H1 (cell line): ENCODE measurements at regions of chr7 and their contacts with region 1.

Region 1: DNA sequence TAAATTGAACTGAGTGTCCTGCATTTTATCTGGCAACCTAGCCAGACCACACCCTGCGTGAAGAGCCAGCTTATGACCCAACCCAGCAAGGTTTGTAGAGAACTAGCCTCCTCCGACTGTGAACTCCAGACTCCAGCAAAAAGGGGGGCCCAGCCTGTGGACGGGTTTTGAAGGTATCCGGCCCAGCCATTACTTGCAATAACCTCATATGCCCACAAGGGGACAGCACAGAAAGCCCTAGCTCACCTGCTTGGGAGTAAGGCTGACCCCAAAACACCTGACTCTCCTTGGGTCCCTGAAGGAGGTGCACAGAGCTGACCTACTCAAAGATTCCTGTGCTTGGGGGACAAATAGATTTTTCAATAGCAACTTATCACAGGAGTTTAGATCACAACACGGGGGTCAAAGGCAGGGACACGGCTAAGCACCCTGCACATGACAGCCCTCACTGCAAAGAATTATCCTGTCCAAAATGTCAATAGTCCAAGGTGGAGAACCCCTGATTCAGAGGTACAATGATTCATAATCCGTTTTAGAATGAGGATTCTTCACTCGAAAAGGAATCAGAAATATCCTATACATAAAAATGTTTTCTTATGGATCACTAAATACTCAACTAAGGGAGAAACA is 4.6 kb downstream of the TRPV6 start:
- DNase-seq: peak; percentile 23 to 78
- H3K4me3 ChIP-seq: no peak overlapping the region
- H3K27ac ChIP-seq: no peak overlapping the region
- H3K4me1 ChIP-seq: peaks cover 0 to 8% (median 2%) of the 10 kb centered on the region in 4 experiments; a peak in 2 of 7 replicates
- H3K27me3 ChIP-seq: 0 out of 7 replicates have a peak, but pooled peaks cover 0 to 2% (median 0%) of the 10 kb centered on the region in 4 experiments
- CTCF ChIP-seq: peak; percentile 83 to 96 (median 95)
- EP300 ChIP-seq: no peak
- POLR2A ChIP-seq: no peak
- RAD21 ChIP-seq: peak; percentile 77 to 84

Region 2: GRCh38 chr7:142811154-142811737 is 69.7 kb before region 1 on chr7:
- CTCF ChIA-PET with region 1: interaction called, 16 read pairs
- POLR2A ChIA-PET with region 1: no interaction called
- DNase-seq: no peak
- H3K4me3 ChIP-seq: no peak overlapping the region
- H3K27ac ChIP-seq: no peak overlapping the region
- H3K4me1 ChIP-seq: peaks cover 10 to 23% (median 17%) of the 10 kb centered on the region in 4 experiments
- H3K27me3 ChIP-seq: no peaks in the 10 kb centered on the region
- CTCF ChIP-seq: peak in 2 of 3 experiments; percentile 60 to 68; a peak in 3 of 4 replicates
- EP300 ChIP-seq: no peak
- POLR2A ChIP-seq: no peak
- RAD21 ChIP-seq: peak; percentile 65 to 78

Region 3: DNA sequence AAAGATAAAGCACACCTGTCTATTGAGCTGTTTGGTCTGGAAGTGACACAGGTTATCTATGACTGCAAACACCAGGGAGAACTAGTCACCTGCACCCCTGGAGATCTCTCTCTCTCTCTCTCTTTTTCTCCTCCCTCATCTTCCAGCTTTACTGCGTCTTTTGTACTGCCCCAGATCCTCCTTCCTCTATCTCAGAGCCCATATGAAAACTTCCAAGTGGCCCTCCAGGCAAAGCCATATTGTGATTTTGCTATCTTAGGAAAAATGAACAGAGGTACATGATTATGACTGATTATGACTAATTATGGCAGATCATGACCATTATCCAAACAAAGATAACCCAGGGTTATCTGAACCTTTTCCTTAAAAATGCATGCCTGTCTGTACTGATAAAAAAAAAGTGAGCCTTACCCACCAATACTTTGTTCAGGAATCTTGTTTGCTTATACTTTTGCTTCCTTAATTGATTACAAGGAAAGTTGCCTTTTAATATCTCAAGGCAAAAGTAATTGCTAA is 38.7 kb before region 1 on chr7:
- CTCF ChIA-PET with region 1: no interaction called
- POLR2A ChIA-PET with region 1: no interaction called
- DNase-seq: no peak
- H3K4me3 ChIP-seq: no peak overlapping the region
- H3K27ac ChIP-seq: no peak overlapping the region
- H3K4me1 ChIP-seq: no peaks in the 10 kb centered on the region
- H3K27me3 ChIP-seq: peaks cover 0 to 1% (median 0%) of the 10 kb centered on the region in 4 experiments; a peak in 1 of 7 replicates
- CTCF ChIP-seq: no peak
- EP300 ChIP-seq: no peak
- POLR2A ChIP-seq: no peak
- RAD21 ChIP-seq: no peak

Region 4: GRCh38 chr7:142866361-142867058 is 14.5 kb before region 1 on chr7:
- CTCF ChIA-PET with region 1: interaction called, 87 read pairs
- POLR2A ChIA-PET with region 1: no interaction called
- DNase-seq: peak in 1 of 2 experiments; percentile 82
- H3K4me3 ChIP-seq: no peak overlapping the region
- H3K27ac ChIP-seq: no peak overlapping the region
- H3K4me1 ChIP-seq: peaks cover 3 to 10% (median 9%) of the 10 kb centered on the region in 4 experiments; a peak in 6 of 7 replicates
- H3K27me3 ChIP-seq: no peaks in the 10 kb centered on the region
- CTCF ChIP-seq: peak; percentile 79 to 84 (median 83)
- EP300 ChIP-seq: no peak
- POLR2A ChIP-seq: no peak
- RAD21 ChIP-seq: peak; percentile 67 to 77

Region 5: DNA sequence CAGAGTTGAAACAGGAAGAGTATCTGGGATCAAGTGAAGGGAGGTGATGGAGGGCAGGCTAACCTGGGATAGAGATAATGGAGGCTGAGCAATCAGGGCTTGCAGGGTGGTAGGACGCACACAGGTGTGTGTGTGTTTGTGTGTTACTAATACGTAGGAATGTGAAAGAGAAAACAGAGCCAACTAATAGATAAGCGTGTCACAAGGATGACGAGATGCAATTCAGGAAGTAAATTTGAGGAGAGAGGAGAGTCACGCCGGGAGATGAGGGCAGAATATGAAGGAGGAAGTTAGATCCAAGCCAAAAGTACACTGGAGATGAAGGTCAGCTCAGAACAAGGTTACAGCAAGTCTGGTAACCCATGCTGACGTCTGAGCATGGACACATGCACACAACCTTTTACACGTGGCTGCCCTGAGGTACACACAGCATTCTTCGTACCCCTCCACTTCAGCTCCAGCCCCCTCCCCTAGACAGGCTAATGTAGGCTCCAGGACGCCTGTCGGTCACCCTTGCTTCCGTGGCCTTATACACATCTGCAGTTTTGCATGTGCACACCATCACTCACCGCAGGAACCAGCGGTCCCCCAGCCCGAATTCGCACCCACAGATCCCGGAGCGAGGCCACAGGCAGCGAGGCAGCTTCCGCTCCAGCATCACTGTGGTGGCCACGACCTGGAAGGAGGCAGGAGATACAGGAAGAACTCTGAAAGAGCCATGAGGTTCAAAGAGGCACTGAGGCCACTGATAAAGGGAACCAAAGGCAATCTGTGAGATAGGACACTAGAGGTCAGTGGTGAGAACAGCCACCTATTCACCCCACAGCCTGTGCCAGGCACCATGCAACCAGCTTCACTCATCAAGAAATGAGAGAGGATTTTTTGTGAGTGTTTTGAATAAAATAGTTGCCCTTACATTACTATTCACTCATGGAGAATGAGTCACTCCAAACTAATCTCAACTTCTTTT is 28.2 kb after region 1 on chr7:
- CTCF ChIA-PET with region 1: interaction called, 32 read pairs
- POLR2A ChIA-PET with region 1: no interaction called
- DNase-seq: no peak
- H3K4me3 ChIP-seq: no peak overlapping the region
- H3K27ac ChIP-seq: no peak overlapping the region
- H3K4me1 ChIP-seq: no peaks in the 10 kb centered on the region
- H3K27me3 ChIP-seq: no peaks in the 10 kb centered on the region
- CTCF ChIP-seq: peak; percentile 41 to 72 (median 53)
- EP300 ChIP-seq: no peak
- POLR2A ChIP-seq: no peak
- RAD21 ChIP-seq: peak; percentile 43 to 55

Region 6: DNA sequence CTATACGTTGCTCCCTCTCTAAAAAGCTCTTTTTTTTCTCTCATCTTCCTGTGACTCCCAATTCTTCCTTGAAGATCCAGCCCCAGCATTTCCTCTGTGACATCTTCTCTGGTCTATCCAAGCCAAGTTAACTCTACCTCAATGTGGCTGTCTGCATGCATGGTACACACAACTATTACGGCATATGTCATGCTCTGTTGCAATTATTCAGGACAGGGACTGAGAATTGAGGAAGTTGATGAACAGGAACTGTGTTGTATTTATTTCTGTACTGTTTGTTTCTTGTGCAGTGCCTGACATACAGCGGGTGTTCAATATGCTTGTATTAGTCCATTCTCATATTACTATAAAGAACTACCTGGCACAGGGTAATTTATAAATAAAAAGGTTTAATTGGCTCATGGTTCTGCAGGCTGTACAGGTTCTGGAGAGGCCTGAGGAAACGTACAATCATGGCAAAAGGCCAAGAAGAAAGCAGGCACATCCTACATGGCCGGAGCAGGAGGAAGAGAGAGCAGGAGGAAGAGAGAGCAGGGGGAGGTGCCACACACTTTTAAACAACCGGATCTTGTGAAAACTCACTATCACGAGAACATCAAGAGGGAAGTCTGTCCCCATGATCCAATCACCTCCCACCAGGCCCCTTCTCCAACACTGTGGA is 46.2 kb after region 1 on chr7:
- CTCF ChIA-PET with region 1: interaction called, 13 read pairs
- POLR2A ChIA-PET with region 1: interaction called, 3 read pairs
- DNase-seq: no peak
- H3K4me3 ChIP-seq: no peak overlapping the region
- H3K27ac ChIP-seq: no peak overlapping the region
- H3K4me1 ChIP-seq: no peaks in the 10 kb centered on the region; a peak in 1 of 7 replicates
- H3K27me3 ChIP-seq: peaks cover 0 to 8% (median 0%) of the 10 kb centered on the region in 4 experiments; a peak in 4 of 7 replicates
- CTCF ChIP-seq: no peak
- EP300 ChIP-seq: no peak
- POLR2A ChIP-seq: no peak
- RAD21 ChIP-seq: no peak

Region 7: DNA sequence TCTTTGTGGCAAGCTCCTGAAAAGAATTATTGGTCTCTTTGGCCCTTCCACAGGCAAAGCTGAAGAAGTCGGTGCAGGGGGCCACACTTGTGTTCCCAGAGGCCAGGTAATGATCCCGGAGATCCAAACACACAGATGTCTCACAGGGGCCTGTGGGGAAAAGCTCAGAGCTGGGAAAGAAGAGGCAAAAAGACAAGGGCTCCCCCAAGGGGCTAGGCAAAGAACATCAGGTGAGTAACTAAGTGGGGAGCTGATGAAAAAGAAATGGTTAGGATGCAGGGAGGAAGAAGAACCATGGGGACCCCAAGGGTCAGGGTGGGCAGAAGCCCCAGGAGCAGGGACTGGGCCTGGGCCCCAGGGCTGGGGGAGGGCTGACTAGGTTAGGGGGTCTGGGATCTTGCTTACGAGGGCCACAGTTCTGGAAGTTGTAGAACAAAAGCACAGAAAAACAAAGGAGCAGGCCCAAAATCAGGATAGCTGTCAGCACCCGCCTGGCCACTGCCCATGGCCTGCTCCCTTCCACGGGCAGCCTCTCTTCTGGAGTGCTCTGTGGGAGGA is 80.0 kb after region 1 on chr7:
- CTCF ChIA-PET with region 1: interaction called, 13 read pairs
- POLR2A ChIA-PET with region 1: no interaction called
- DNase-seq: no peak
- H3K4me3 ChIP-seq: no peak overlapping the region
- H3K27ac ChIP-seq: no peak overlapping the region
- H3K4me1 ChIP-seq: peaks cover 0 to 11% (median 6%) of the 10 kb centered on the region in 4 experiments; a peak in 6 of 7 replicates
- H3K27me3 ChIP-seq: no peaks in the 10 kb centered on the region
- CTCF ChIP-seq: peak in 2 of 3 experiments; percentile 32 to 45; a peak in 3 of 4 replicates
- EP300 ChIP-seq: no peak
- POLR2A ChIP-seq: no peak
- RAD21 ChIP-seq: peak; percentile 41 to 55; a peak in 3 of 4 replicates